ENCODE measurements at regions of chr22 and their contacts with region 1.

Region 1: DNA sequence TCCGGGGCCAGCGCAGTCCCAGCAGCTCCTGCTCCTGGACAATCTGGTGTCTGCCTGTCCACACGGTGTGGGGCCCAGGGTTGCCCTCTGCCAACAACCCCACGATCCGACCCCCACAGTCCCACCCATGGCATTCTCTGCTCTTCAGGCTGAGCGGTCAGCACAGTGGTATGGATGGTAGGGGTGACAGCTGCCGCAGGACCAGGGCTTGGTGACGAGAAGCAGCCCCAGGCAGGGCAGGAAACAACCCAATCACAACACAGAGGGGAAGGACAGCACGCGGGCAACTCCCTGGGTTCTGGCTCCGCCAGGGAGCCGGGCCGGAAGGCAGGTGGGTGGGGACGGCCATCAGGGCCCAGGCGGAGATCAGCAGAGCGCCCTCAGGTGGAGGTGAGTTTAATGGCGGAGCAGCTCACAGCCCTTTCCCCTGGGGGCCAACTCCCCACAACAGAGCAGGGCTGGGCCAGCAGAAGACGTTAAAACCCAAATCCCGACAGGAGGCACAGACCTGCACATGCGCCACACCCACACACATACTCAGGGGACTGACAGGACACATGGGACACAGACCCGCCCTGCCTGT is 5.3 kb upstream of the CHADL start:
- DNase-seq: peak in 1 of 2 experiments; percentile 83
- H3K4me3 ChIP-seq: no peak overlapping the region
- H3K27ac ChIP-seq: no peak overlapping the region
- H3K4me1 ChIP-seq: peaks cover 0 to 1% (median 0%) of the 10 kb centered on the region in 4 experiments; a peak in 3 of 7 replicates
- H3K27me3 ChIP-seq: no peaks in the 10 kb centered on the region
- CTCF ChIP-seq: peak; percentile 67 to 80 (median 72)
- EP300 ChIP-seq: no peak
- POLR2A ChIP-seq: no peak
- RAD21 ChIP-seq: peak; percentile 33 to 59

Region 2: GRCh38 chr22:40965936-40966725 is 279.9 kb before region 1 on chr22:
- CTCF ChIA-PET with region 1: no interaction called
- POLR2A ChIA-PET with region 1: no interaction called
- DNase-seq: no peak
- H3K4me3 ChIP-seq: no peak overlapping the region
- H3K27ac ChIP-seq: no peak overlapping the region
- H3K4me1 ChIP-seq: no peaks in the 10 kb centered on the region
- H3K27me3 ChIP-seq: no peaks in the 10 kb centered on the region
- CTCF ChIP-seq: no peak
- EP300 ChIP-seq: no peak
- POLR2A ChIP-seq: no peak
- RAD21 ChIP-seq: no peak

Region 3: GRCh38 chr22:41256254-41256897 is 10.4 kb after region 1 on chr22:
- CTCF ChIA-PET with region 1: interaction called, 10 read pairs
- POLR2A ChIA-PET with region 1: interaction called, 23 read pairs
- DNase-seq: no peak
- H3K4me3 ChIP-seq: no peak overlapping the region
- H3K27ac ChIP-seq: no peak overlapping the region; the same call in 1 of the 2 replicates
- H3K4me1 ChIP-seq: peaks cover 0 to 4% (median under 1%) of the 10 kb centered on the region in 4 experiments; a peak in 2 of 7 replicates
- H3K27me3 ChIP-seq: no peaks in the 10 kb centered on the region
- CTCF ChIP-seq: no peak
- EP300 ChIP-seq: no peak
- POLR2A ChIP-seq: no peak
- RAD21 ChIP-seq: no peak

Region 4: DNA sequence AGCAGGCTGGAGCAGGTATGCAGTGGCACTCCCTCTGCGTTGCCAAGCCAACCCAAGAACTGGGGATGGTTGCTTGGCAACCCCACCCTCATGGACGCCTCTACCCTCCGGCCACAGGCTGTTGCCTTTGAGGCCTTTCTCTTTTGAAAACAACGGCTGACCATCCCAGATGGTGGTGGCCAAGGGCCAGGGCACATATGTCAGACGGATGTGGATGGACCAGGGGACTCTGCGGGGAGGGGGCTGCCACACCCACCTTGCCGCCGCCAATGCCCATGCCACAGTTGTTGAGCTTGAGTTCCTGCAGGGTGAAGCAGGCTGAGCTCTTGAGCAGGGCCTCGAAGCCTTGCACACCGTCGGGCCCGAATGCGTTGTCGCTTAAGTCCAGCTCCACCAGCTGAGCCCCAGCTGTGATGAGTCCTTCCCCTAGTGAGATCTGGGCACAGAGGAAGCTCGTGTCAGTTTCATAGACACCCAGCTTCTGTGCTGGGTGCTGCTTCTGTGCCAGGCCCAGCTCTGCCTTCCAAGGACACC is 18.5 kb after region 1 on chr22:
- CTCF ChIA-PET with region 1: interaction called, 4 read pairs
- POLR2A ChIA-PET with region 1: interaction called, 26 read pairs
- DNase-seq: no peak
- H3K4me3 ChIP-seq: no peak overlapping the region
- H3K27ac ChIP-seq: no peak overlapping the region
- H3K4me1 ChIP-seq: no peaks in the 10 kb centered on the region
- H3K27me3 ChIP-seq: no peaks in the 10 kb centered on the region
- CTCF ChIP-seq: no peak
- EP300 ChIP-seq: no peak
- POLR2A ChIP-seq: no peak
- RAD21 ChIP-seq: no peak

Region 5: DNA sequence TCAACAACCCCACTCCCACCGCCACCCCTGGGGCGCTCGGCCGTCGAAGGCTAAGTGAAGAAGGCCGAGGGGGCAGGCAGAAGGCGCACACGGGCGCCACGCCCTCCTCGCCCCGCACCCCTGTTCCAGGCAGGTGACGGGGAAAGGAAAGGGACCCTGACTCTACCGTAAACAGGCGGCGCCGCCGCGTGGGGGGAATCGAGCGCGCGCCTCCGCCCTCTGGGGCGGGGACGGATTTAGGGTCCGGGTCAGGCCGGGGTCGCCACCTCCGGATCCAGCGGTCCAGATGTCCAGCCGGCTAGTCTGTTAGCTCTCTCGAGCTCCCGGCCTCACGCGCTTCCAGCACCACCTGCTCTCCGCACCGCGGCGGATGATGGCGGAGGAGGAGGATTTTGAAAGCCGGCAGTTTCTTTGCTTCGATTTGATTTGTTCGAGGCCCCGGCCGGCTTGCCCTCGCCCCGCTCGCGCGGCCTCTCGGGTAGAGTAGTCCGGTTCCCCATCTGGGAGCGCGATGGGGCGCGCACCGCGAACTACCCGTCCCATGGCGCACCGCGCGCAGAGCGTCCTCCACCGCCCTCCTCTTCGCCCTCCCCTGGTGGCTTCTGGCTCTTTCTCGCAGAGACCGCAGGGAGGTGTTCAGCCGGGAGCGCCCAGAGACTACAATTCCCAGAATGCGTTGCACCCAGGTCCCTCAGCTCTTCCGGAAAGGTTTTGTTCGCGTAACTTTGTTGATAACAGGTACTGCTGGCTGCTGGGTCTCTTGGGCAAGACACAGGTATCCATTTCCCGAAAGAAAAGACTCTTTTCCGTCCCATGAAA is 40.0 kb after region 1 on chr22 and contains the start of gene RANGAP1:
- CTCF ChIA-PET with region 1: interaction called, 10 read pairs
- POLR2A ChIA-PET with region 1: interaction called, 5 read pairs
- DNase-seq: peak; percentile 95
- H3K4me3 ChIP-seq: peak within 1 kb of the TSS; percentile 76 to 93 (median 82)
- H3K27ac ChIP-seq: peak within 1 kb of the TSS; percentile 67
- H3K4me1 ChIP-seq: peaks cover 2 to 20% (median 10%) of the 10 kb centered on the region in 4 experiments; a peak in 6 of 7 replicates
- H3K27me3 ChIP-seq: no peaks in the 10 kb centered on the region
- CTCF ChIP-seq: peak in 1 of 3 experiments; percentile 22; a peak in 1 of 4 replicates
- EP300 ChIP-seq: no peak
- POLR2A ChIP-seq: peak; percentile 83 to 94
- RAD21 ChIP-seq: no peak
- total RNA-seq, gene RANGAP1: 171 and 176 TPM in 2 replicates

Region 6: DNA sequence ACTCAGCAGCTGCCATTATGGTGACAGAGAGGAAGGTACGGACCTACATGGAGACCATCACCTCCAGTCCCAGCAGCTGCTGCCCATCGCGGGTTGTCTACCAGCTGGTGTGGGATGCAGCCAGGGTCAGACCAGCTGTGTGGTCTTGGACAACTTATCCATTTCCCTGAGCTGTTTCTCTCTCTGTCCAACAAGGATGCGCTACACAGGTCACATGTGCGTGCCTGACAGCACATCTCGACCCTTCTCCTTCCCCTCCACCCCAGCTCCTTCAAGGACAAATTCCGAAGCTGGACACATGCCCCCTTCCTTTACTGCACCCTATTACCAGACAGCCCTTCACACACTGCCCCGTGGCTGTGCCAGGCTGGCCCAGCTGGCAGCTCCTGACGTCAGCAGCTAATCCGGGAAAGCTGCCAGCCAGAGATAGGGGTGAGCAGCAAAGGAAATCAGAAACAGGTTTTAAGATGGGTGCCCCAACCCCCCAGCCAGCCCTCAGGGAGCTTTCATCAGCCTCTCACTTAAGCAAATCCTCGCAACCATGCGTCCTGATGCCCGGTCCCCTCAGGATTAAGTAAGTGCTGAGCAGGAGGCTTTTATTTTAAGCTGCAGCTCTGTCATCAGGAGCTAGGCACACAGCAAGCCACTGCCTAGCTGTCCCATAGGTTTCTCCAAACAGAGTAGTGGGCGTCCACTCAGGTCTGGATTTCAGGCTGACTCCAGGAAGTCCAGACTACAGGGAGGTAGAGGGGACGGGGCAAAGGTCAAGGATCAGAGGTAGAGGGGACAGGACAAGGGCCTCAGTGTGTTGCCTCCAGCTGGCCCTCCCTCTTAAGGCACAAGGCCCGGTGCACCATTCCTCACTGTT is 156.0 kb after region 1 on chr22:
- CTCF ChIA-PET with region 1: no interaction called
- POLR2A ChIA-PET with region 1: no interaction called
- DNase-seq: no peak
- H3K4me3 ChIP-seq: no peak overlapping the region
- H3K27ac ChIP-seq: no peak overlapping the region
- H3K4me1 ChIP-seq: peaks cover 0 to 3% (median 0%) of the 10 kb centered on the region in 4 experiments; a peak in 1 of 7 replicates
- H3K27me3 ChIP-seq: no peaks in the 10 kb centered on the region
- CTCF ChIP-seq: no peak
- EP300 ChIP-seq: no peak
- POLR2A ChIP-seq: no peak
- RAD21 ChIP-seq: no peak

Measured in H1 (cell line).